MCF 10A (cell line): ENCODE measurements at regions of chr1 and their contacts with region 1.

Region 1: DNA sequence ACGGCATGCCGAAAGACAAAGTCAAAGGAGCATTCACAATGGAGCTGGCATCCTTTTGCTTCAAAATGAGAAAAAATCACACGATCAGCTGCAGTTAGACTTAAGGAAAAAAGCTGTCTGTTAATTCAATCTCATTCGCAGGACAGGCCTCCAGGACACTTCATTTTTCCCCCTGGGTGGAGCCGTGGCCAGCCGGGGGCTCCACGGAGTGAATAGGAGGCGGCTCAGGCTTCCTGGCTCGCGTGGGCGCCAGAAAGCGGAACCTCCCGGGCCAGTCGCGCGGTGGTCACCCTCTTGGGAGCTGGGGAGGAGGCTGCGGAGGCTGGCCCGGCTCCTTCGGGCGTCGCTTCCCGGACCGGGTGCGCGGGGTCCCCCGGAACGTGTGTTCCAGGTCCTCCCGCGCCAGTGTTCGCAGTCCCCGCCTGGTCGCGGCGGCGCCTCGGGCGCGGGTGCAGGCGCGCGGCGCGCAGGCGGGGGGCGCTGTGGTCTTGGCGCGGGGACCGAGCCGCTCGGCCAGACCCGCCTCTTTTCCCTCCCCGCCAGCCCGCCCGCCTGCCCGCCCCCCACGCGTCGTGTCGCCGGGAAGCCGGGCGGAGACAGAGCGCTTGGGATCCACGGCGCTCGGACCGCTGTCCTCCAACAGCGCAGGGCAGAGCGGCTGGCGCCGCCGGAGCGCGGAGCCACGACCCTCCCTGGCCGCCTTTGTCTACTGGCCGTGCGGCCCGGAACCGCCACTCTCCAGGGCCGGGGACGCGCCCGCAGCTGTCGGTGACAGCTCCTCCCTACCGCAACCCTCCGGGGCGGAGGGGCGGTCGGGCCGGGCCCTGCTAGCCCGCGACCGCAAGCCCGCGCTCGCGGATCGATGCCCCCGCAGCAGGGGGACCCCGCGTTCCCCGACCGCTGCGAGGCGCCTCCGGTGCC is at the start of gene RHOU:
- DNase-seq: peak; percentile 55
- H3K4me3 Mint-ChIP-seq: peak within 1 kb of the TSS; percentile 72
- H3K27ac Mint-ChIP-seq: peak within 1 kb of the TSS; percentile 61
- H3K4me1 Mint-ChIP-seq: peaks cover 12% of the 10 kb centered on the region
- H3K27me3 Mint-ChIP-seq: peaks cover 9% of the 10 kb centered on the region
- CTCF ChIP-seq: peak; percentile 98
- total RNA-seq, gene RHOU: 2.1 and 3.6 TPM in 2 replicates

Region 2: DNA sequence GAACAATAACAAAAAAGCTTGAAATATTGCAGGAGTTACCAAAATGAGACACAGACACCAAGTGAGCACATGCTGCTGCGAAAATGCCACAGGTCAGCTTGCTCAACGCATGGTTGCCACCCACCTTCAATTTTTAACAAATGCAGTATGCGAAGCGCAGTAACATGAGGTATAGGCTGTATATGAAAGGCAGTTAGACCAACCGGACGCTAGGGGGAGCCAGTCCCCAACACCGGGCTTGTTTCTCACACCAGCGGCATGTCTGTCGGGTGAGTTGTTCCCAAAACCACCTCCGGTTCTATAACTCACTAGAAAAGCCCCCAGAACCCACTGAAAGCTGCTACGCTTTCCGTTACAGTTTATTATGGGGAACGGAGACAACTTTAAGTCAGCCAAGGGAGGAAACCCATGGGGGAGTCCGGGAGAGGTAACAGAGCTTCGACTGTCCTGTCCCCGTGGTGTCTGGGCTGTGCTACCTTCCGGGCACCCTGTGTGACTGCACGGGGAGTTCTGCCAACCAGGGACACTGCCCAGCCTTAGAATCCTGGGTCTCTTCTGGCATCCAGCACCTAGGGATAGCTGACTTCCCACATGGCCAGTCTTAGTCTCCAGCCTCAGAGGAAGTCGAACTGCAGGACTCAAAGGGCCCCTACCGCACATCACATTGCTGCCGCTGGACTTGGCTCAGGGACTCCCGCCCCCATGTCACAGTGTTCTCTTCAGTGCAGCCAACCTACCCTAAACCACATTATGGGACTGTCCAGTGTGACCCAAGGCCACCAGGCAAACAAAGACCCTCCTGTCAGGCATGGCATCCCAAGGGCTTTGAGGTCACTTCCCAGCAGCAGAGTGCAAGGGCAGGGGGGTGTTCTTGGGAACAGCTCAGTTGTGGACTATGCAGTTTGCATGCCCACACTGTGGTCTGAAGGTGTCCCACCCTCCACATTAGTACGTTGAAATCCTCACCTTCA is 234.0 kb before region 1 on chr1:
- CTCF ChIA-PET with region 1: no interaction called
- POLR2A ChIA-PET with region 1: no interaction called
- intact Hi-C with region 1: no loop called
- DNase-seq: peak; percentile 97
- H3K4me3 Mint-ChIP-seq: peak overlapping the region; percentile 20
- H3K27ac Mint-ChIP-seq: no peak overlapping the region
- H3K4me1 Mint-ChIP-seq: peaks cover 10% of the 10 kb centered on the region
- H3K27me3 Mint-ChIP-seq: no peaks in the 10 kb centered on the region
- CTCF ChIP-seq: peak; percentile 99

Region 3: GRCh38 chr1:228697207-228698016 is 37.7 kb before region 1 on chr1:
- CTCF ChIA-PET with region 1: interaction called, 5 read pairs
- POLR2A ChIA-PET with region 1: interaction called, 5 read pairs
- intact Hi-C with region 1: loop called (anchors 2 kb)
- DNase-seq: peak; percentile 100
- H3K4me3 Mint-ChIP-seq: no peak overlapping the region
- H3K27ac Mint-ChIP-seq: peak overlapping the region; percentile 24
- H3K4me1 Mint-ChIP-seq: peaks cover 32% of the 10 kb centered on the region
- H3K27me3 Mint-ChIP-seq: no peaks in the 10 kb centered on the region
- CTCF ChIP-seq: no peak

Region 4: DNA sequence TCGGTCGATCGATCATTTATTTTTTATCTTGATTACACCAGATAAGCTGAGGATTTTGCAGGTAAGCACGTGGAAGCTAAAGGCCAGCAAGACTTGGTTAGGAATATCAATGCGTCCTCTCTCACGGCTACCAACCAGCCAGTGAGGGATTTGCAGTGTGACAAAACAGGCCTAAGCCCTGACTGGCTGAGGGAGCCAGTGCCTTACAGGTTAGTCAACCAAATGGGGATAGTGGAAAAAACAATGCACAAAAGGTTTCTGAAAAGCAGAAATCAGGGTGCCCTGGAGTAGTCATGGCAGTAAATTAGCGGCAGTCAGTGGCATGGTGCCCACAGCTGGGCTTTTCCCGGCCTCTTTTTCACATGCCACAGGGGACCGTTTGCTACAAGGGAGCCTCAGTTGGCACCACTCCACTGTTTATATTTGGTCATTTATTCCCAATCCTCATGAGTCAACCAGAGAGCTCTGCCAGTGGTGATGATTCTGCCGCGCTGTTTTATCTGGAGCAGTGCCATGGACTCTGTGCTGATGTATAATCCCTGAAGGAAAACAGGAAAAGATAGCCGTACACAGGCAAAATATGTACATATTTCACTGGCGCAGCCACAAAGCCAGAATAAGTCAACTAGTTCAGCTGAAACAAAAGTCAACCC is 167.8 kb after region 1 on chr1:
- CTCF ChIA-PET with region 1: interaction called, 4 read pairs
- POLR2A ChIA-PET with region 1: no interaction called
- intact Hi-C with region 1: loop called (anchors 5 kb)
- DNase-seq: peak; percentile 100
- H3K4me3 Mint-ChIP-seq: peak overlapping the region; percentile 57
- H3K27ac Mint-ChIP-seq: peak overlapping the region; percentile 89
- H3K4me1 Mint-ChIP-seq: peaks cover 30% of the 10 kb centered on the region
- H3K27me3 Mint-ChIP-seq: peaks cover 75% of the 10 kb centered on the region
- CTCF ChIP-seq: no peak

Region 5: GRCh38 chr1:229024528-229025130 is 289.5 kb after region 1 on chr1:
- CTCF ChIA-PET with region 1: interaction called, 5 read pairs
- POLR2A ChIA-PET with region 1: interaction called, 7 read pairs
- intact Hi-C with region 1: loop called (anchors 10 kb)
- DNase-seq: peak; percentile 98
- H3K4me3 Mint-ChIP-seq: no peak overlapping the region
- H3K27ac Mint-ChIP-seq: peak overlapping the region; percentile 21
- H3K4me1 Mint-ChIP-seq: peaks cover 25% of the 10 kb centered on the region
- H3K27me3 Mint-ChIP-seq: peaks cover 11% of the 10 kb centered on the region
- CTCF ChIP-seq: no peak

Region 6: GRCh38 chr1:229156872-229157271 is 421.7 kb after region 1 on chr1:
- CTCF ChIA-PET with region 1: interaction called, 16 read pairs
- POLR2A ChIA-PET with region 1: interaction called, 3 read pairs
- intact Hi-C with region 1: loop called (anchors 1 kb)
- DNase-seq: peak; percentile 54
- H3K4me3 Mint-ChIP-seq: no peak overlapping the region
- H3K27ac Mint-ChIP-seq: no peak overlapping the region
- H3K4me1 Mint-ChIP-seq: no peaks in the 10 kb centered on the region
- H3K27me3 Mint-ChIP-seq: no peaks in the 10 kb centered on the region
- CTCF ChIP-seq: peak; percentile 58